PC-3 (cell line): ENCODE measurements at regions of chr9 and their contacts with region 1.

Region 1: GRCh38 chr9:122464633-122465567 is 12.8 kb downstream of the OR1J1 start:
- DNase-seq: peak; percentile 84
- ATAC-seq: peak; percentile 84
- H3K4me3 ChIP-seq: peak overlapping the region; percentile 73
- H3K27ac ChIP-seq: no peak overlapping the region
- H3K4me1 ChIP-seq: peaks cover 8% of the 10 kb centered on the region; the same call in 1 of the 2 replicates
- H3K27me3 ChIP-seq: peaks cover 4% of the 10 kb centered on the region; the same call in 1 of the 2 replicates
- CTCF ChIP-seq: peak; percentile 79

Region 2: DNA sequence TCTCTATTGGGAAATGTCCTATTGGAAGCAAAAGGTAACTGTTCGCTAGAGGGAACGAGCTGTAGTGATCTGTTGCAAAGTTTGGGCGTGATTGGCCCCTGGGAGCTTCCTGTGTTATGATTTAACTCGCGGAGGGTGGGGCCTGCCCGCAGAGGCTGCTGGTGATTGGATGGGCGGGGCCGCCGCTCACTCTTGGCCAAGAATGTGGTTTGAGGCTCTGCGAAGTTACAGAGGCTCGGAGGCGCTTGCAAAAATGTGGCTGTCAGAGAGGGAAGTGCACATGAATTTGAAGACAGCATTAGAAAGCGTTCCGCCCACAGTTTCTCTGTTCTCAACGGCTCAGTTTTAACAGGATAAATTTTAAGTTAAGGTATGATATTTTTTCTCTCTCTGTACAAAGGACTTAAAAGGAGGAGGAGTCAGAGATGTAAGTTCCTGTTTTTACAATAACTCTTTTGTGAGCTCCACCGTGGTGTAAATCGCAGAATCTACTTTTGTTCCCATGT is 1343.3 kb before region 1 on chr9:
- CTCF ChIA-PET with region 1: no interaction called
- POLR2A ChIA-PET with region 1: no interaction called
- intact Hi-C with region 1: no loop called
- DNase-seq: peak; percentile 91
- ATAC-seq: peak; percentile 100
- H3K4me3 ChIP-seq: peak overlapping the region; percentile 72
- H3K27ac ChIP-seq: peak overlapping the region; percentile 26
- H3K4me1 ChIP-seq: peaks cover 14% of the 10 kb centered on the region
- H3K27me3 ChIP-seq: no peaks in the 10 kb centered on the region
- CTCF ChIP-seq: no peak

Region 3: GRCh38 chr9:122506964-122507363 is 42.1 kb after region 1 on chr9:
- CTCF ChIA-PET with region 1: no interaction called
- POLR2A ChIA-PET with region 1: no interaction called
- intact Hi-C with region 1: no loop called
- DNase-seq: no peak
- ATAC-seq: no peak
- H3K4me3 ChIP-seq: no peak overlapping the region
- H3K27ac ChIP-seq: no peak overlapping the region
- H3K4me1 ChIP-seq: no peaks in the 10 kb centered on the region
- H3K27me3 ChIP-seq: peaks cover 27% of the 10 kb centered on the region
- CTCF ChIP-seq: no peak

Region 4: GRCh38 chr9:122810306-122810946 is 345.5 kb after region 1 on chr9:
- CTCF ChIA-PET with region 1: no interaction called
- POLR2A ChIA-PET with region 1: no interaction called
- intact Hi-C with region 1: loop called (anchors 1 kb)
- DNase-seq: peak; percentile 86
- ATAC-seq: peak; percentile 91
- H3K4me3 ChIP-seq: peak overlapping the region; percentile 52; the same call in 1 of the 2 replicates
- H3K27ac ChIP-seq: no peak overlapping the region
- H3K4me1 ChIP-seq: peaks cover 7% of the 10 kb centered on the region
- H3K27me3 ChIP-seq: no peaks in the 10 kb centered on the region
- CTCF ChIP-seq: peak; percentile 81